ENCODE measurements at regions of chr19 and their contacts with region 1.

Region 1: GRCh38 chr19:2944775-2945574 is at the start of gene ZNF77:
- DNase-seq: peak; percentile 92
- H3K4me3 ChIP-seq: peak within 1 kb of the TSS; percentile 65 to 91 (median 77)
- H3K27ac ChIP-seq: peak within 1 kb of the TSS; percentile 90 to 97 (median 93)
- H3K4me1 ChIP-seq: peaks cover 13 to 43% (median 23%) of the 10 kb centered on the region in 3 donors
- H3K27me3 ChIP-seq: no peaks in the 10 kb centered on the region
- CTCF ChIP-seq: peak in 4 of 6 experiments; percentile 6 to 49 (median 26)
- POLR2A ChIP-seq: peak in 2 of 4 donors; percentile 42 to 43
- total RNA-seq, gene ZNF77: 3.1 to 5.9 (median 4.5) TPM

Region 2: DNA sequence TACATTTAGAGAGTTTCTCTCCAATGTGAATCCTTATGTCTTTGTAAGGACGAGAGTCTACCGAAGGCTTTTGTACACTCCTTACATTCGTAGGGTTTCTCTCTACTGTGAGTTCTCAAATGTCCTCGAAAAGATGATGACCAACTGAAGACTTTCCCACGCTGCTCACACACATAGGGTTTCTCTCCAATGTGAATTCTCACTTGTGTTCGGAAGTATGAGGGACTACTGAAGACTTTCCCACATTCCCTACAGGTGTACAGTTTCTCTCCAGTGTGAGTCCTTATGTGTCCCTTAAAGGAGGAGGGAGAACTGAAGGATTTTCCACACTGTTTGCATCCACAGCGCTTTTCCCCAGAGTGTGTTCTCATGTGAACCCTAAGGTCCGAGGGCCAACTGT is 48.3 kb before region 1 on chr19:
- intact Hi-C with region 1: loop called (anchors 10 kb)
- DNase-seq: no peak
- H3K4me3 ChIP-seq: no peak overlapping the region
- H3K27ac ChIP-seq: no peak overlapping the region
- H3K4me1 ChIP-seq: peaks cover 0 to 6% (median 0%) of the 10 kb centered on the region in 3 donors
- H3K27me3 ChIP-seq: no peaks in the 10 kb centered on the region
- CTCF ChIP-seq: no peak
- POLR2A ChIP-seq: no peak

Measured in esophagus squamous epithelium (tissue), 5 donors.